Heart left ventricle (tissue), 16 donors: ENCODE measurements at regions of chr7 and their contacts with region 1.

Region 1: DNA sequence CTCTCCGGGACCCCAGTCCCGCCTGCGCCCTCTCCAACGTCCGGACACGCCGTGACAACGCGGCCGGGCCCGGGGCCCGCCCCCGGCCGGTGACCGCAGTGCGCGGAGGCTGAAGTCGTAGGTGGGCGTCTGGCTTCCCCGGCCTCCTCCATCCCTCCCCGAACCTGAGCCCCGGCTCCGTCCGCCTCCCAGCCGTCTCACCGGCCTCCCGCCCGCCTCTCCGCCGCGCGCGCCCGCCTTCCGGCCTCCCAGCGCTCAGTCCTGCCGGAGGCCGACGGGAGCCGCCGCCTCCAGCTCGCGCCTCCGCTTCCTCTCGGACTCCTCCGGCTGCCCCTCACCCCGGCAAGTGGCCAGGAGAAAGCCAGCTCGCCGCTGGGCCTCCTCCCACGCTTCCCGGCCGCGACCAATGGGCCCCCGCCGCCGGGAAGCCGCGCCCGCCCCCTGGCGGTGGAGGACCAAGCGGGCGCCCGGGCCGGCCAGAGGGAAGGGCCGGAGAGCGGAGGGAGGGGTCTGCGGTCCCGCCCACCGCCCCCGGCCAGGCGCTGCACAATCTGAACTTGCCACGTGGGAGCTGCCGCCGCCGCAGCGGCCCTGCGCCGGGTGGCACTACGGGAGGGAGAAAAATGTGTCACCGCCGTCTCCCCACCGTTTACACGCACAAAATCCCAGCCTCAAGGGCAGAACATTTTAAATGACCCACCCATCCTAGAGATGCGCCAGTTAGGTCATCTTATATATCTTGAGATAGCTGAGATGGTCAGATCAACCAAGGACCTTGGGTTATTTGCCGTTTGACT is at the start of gene FAM3C:
- DNase-seq: peak; percentile 94 to 96 (median 95)
- ATAC-seq: peak; percentile 98 to 99 (median 99)
- H3K4me3 ChIP-seq: peak within 1 kb of the TSS; percentile 66 to 95 (median 86)
- H3K27ac ChIP-seq: peak within 1 kb of the TSS; percentile 63 to 92 (median 86)
- H3K4me1 ChIP-seq: peaks cover 0 to 26% (median 10%) of the 10 kb centered on the region in 12 donors
- H3K27me3 ChIP-seq: no peaks in the 10 kb centered on the region
- CTCF ChIP-seq: peak; percentile 92 to 100 (median 98)
- POLR2A ChIP-seq: peak in 1 of 2 donors; percentile 90
- total RNA-seq, gene FAM3C: 35.7 to 52.1 (median 45.3) TPM

Region 2: DNA sequence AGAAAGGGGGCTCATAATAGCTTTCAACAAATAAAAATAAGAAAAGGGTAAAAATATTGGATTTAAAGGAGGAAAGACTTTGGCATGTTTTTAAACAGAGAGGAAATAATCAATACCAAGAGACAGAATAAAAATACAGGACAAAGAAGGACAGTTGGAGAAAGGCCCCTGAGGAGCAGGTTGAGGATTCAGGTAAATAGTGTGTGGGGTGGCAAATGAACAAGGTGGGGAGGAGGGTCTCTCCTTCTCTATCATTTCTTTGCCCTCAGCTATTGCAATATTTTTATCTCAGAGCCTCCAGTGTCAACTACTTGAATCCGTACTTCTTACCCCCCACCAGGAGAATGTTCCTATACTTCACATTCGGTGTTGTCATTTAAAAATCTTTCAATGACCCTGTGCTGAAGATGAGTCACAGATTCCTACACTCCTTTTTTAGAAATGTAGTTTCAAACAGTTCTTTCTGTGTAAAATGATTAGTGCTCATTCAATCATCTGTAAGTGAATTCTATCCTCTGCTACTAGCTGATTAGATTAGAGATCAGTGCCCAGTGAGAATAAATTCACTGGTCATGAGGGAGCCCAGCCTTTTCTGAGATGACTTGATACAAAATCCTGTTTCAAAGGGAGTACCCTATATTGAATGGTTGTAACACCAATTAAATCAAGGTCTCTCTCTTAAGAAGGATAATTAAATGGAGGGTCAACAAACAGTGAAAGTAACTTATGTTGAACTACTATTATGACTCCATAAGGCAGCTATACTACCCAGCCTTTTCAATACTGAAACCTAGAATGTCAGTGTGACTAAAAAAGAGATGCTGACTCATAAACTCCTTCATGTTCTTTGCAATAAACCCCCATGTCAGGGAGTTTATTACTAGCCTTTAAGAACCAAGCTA is 117.8 kb before region 1 on chr7:
- intact Hi-C with region 1: no loop called
- DNase-seq: no peak
- ATAC-seq: peak in 1 of 4 donors; percentile 36
- H3K4me3 ChIP-seq: no peak overlapping the region
- H3K27ac ChIP-seq: no peak overlapping the region
- H3K4me1 ChIP-seq: peaks cover 0 to 9% (median 0%) of the 10 kb centered on the region in 12 donors
- H3K27me3 ChIP-seq: no peaks in the 10 kb centered on the region
- CTCF ChIP-seq: no peak
- POLR2A ChIP-seq: no peak

Region 3: DNA sequence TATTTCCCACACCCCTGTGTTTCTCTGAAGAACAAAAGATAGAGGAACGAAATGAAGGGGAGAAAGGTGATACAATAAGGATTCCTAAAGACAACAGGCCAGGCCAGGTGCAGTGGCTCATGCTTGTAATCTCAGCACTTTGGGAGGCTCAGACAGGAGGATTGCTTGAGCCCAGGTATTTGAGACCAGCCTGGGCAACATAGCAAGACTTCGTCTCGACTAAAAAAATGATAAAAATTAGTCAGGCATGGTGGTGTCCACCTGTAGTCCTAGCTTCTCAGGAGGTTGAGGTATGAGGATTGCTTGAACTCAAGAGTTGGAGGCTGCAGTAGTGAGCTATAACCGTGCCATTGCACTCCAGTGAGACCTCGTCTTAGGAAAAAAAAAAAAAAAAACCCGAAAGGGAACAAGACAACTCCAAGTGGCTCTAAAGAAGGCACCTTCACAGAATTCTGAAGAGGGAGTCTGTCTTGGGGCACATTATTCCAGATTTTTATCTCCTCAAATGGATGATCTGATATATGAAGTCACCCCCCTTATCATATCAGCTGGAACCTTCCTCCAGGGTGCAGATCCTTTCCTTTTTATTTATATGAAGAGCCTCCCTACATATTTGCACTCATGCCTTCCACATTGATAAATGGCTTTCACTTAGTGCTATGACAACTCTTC is 41.4 kb after region 1 on chr7:
- intact Hi-C with region 1: loop called in 3 of 10 experiments (anchors 5 to 10 kb)
- DNase-seq: no peak
- ATAC-seq: no peak
- H3K4me3 ChIP-seq: peak overlapping the region in 5 of 12 donors; percentile 3 to 40 (median 35)
- H3K27ac ChIP-seq: peak overlapping the region in 7 of 12 donors; percentile 17 to 70 (median 57)
- H3K4me1 ChIP-seq: peaks cover 0 to 20% (median 10%) of the 10 kb centered on the region in 12 donors
- H3K27me3 ChIP-seq: no peaks in the 10 kb centered on the region
- CTCF ChIP-seq: no peak
- POLR2A ChIP-seq: no peak

Region 4: GRCh38 chr7:121442845-121443244 is 46.7 kb after region 1 on chr7:
- intact Hi-C with region 1: loop called in 4 of 10 experiments (anchors 5 to 10 kb)
- DNase-seq: no peak
- ATAC-seq: no peak
- H3K4me3 ChIP-seq: no peak overlapping the region
- H3K27ac ChIP-seq: no peak overlapping the region
- H3K4me1 ChIP-seq: peaks cover 0 to 35% (median 9%) of the 10 kb centered on the region in 12 donors
- H3K27me3 ChIP-seq: no peaks in the 10 kb centered on the region
- CTCF ChIP-seq: no peak
- POLR2A ChIP-seq: no peak

Region 5: GRCh38 chr7:121449329-121449728 is 53.2 kb after region 1 on chr7:
- intact Hi-C with region 1: loop called in 3 of 10 experiments (anchors 5 to 10 kb)
- DNase-seq: no peak
- ATAC-seq: no peak
- H3K4me3 ChIP-seq: no peak overlapping the region
- H3K27ac ChIP-seq: peak overlapping the region in 1 of 12 donors; percentile 70
- H3K4me1 ChIP-seq: peaks cover 0 to 42% (median 7%) of the 10 kb centered on the region in 12 donors
- H3K27me3 ChIP-seq: no peaks in the 10 kb centered on the region
- CTCF ChIP-seq: no peak
- POLR2A ChIP-seq: no peak